CD4-positive, alpha-beta memory T cell (primary cell): ENCODE measurements at regions of chr1 and their contacts with region 1.

Region 1: GRCh38 chr1:65265651-65266351 is 43.5 kb upstream of the DNAJC6 start:
- DNase-seq: peak; percentile 32 to 56 (median 45)
- H3K4me3 ChIP-seq: peak overlapping the region in 1 of 2 donors; percentile 46
- H3K4me3 Mint-ChIP-seq: peak overlapping the region; percentile 68 to 80 (median 74)
- H3K27ac ChIP-seq: no peak overlapping the region
- H3K27ac Mint-ChIP-seq: peak overlapping the region in 2 of 7 donors; percentile 23 to 48
- H3K4me1 ChIP-seq: peaks cover 15% of the 10 kb centered on the region
- H3K4me1 Mint-ChIP-seq: peaks cover 8 to 15% (median 12%) of the 10 kb centered on the region in 4 donors
- H3K27me3 ChIP-seq: peaks cover 4% of the 10 kb centered on the region
- H3K27me3 Mint-ChIP-seq: peaks cover 13 to 15% of the 10 kb centered on the region in 2 donors

Region 2: DNA sequence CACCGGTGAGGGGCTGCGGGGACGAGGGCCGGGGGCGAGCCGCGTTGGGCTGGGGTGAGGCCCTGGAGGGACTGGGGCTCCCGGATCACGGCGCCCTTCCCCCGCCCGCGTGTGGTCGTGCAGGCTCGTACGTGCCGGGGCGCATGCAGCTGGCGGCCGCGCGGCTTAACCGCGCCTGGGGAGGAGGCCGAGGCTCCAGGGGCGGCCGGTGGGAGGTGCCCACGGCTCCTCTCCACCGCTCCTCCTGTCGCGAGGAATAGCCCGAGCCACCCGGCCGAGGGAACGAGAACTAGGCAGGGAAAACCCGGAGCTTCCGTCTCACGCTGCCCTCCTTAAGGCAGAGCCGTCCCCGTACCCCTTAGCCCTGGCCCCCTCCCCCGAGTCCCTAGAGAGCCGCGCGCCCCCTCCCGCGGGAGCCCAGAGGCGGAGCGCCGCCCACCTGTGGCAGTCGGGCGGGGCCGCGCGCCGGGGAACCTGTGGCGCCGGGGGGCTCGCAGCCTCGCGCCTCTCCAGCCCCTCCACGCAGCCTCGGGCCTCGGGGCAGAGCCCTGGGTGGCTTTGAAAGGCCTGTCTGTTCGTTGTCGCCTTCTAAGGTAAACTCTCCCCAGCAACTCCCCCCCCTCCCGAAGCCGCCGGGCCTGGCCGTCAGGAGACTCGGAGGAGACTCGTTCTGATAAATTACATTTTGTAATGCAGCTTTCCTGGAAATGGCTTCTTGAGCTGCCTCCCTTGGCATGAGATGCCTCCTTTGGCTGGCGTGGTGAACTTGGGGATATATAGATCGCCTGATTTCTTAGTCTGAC is 117.1 kb before region 1 on chr1:
- CTCF ChIA-PET with region 1: no interaction called
- POLR2A ChIA-PET with region 1: no interaction called
- intact Hi-C with region 1: no loop called
- DNase-seq: peak in 3 of 5 donors; percentile 2 to 19 (median 4)
- H3K4me3 ChIP-seq: peak overlapping the region; percentile 19 to 36
- H3K4me3 Mint-ChIP-seq: peak overlapping the region; percentile 80 to 94 (median 84)
- H3K27ac ChIP-seq: no peak overlapping the region
- H3K27ac Mint-ChIP-seq: peak overlapping the region in 1 of 7 donors; percentile 41
- H3K4me1 ChIP-seq: peaks cover 14% of the 10 kb centered on the region
- H3K4me1 Mint-ChIP-seq: peaks cover 9 to 18% (median 14%) of the 10 kb centered on the region in 4 donors
- H3K27me3 ChIP-seq: peaks cover 5% of the 10 kb centered on the region
- H3K27me3 Mint-ChIP-seq: peaks cover 35 to 47% of the 10 kb centered on the region in 2 donors

Region 3: GRCh38 chr1:65254319-65255034 is 11.3 kb before region 1 on chr1:
- CTCF ChIA-PET with region 1: interaction called, 4 read pairs
- POLR2A ChIA-PET with region 1: interaction called, 16 read pairs
- intact Hi-C with region 1: loop called (anchors 1 kb)
- DNase-seq: peak; percentile 81 to 85 (median 83)
- H3K4me3 ChIP-seq: peak overlapping the region; percentile 45 to 68
- H3K4me3 Mint-ChIP-seq: peak overlapping the region; percentile 85 to 98 (median 94)
- H3K27ac ChIP-seq: no peak overlapping the region
- H3K27ac Mint-ChIP-seq: peak overlapping the region in 5 of 7 donors; percentile 72 to 94 (median 88)
- H3K4me1 ChIP-seq: peaks cover 20% of the 10 kb centered on the region
- H3K4me1 Mint-ChIP-seq: peaks cover 8 to 20% (median 16%) of the 10 kb centered on the region in 4 donors
- H3K27me3 ChIP-seq: no peaks in the 10 kb centered on the region
- H3K27me3 Mint-ChIP-seq: peaks cover 0 to 4% of the 10 kb centered on the region in 2 donors